ENCODE measurements at regions of chr11 and their contacts with region 1.

Region 1: DNA sequence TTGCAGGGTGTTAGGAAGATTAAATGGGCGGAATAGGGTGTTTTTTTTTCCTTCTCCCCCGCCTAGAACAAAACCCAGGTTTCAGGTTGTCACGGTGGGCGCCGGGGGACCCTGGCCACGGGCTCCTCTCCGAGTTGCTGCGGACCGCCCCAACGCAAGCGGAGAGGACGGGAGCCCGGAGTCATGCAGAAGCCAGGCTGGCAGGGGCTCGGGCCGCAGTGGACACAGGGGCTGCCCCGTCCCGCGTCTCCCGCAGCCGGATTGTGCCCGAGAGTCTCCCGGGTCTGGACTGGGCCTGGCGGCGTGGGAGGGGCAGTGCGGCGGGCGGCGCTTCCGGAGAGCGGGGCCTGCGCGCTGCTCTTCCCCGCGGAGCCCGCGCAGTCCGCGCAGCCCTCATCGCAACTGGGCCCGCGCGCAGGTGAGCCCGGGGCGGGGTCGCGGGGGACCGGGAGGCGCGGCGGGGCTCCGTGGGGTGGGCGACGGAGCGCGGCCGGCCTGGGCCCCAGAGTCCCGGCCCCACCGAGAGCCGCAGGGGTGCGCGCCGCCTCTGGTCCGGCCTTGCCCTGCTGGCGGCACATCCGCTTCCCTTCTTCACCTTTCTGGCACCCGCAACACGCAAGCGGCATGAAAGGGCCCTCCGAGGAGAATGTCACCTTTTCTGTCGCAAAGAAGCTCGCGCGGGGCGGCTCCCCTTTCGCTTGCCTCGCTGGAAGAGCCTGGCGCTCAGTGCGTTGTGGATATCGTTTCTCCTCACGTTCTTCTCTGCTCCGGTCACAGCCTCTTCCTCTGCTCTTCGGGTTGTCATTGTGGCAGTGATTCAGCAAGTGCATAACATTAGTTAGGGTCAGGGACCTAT is at the start of gene TIRAP:
- DNase-seq: peak; percentile 39 to 78 (median 62)
- ATAC-seq: peak; percentile 73 to 80 (median 76)
- H3K4me3 ChIP-seq: peak within 1 kb of the TSS; percentile 64 to 85
- H3K4me3 Mint-ChIP-seq: peak within 1 kb of the TSS; percentile 86 to 95 (median 90)
- H3K27ac ChIP-seq: peak within 1 kb of the TSS; percentile 77
- H3K27ac Mint-ChIP-seq: peak within 1 kb of the TSS; percentile 97 to 98
- H3K4me1 ChIP-seq: peaks cover 11 to 52% of the 10 kb centered on the region in 2 experiments
- H3K4me1 Mint-ChIP-seq: peaks cover 47 to 59% (median 49%) of the 10 kb centered on the region in 3 donors
- H3K27me3 ChIP-seq: no peaks in the 10 kb centered on the region
- H3K27me3 Mint-ChIP-seq: no peaks in the 10 kb centered on the region
- total RNA-seq, gene TIRAP: 11.3 to 23.4 (median 21.9) TPM

Region 2: DNA sequence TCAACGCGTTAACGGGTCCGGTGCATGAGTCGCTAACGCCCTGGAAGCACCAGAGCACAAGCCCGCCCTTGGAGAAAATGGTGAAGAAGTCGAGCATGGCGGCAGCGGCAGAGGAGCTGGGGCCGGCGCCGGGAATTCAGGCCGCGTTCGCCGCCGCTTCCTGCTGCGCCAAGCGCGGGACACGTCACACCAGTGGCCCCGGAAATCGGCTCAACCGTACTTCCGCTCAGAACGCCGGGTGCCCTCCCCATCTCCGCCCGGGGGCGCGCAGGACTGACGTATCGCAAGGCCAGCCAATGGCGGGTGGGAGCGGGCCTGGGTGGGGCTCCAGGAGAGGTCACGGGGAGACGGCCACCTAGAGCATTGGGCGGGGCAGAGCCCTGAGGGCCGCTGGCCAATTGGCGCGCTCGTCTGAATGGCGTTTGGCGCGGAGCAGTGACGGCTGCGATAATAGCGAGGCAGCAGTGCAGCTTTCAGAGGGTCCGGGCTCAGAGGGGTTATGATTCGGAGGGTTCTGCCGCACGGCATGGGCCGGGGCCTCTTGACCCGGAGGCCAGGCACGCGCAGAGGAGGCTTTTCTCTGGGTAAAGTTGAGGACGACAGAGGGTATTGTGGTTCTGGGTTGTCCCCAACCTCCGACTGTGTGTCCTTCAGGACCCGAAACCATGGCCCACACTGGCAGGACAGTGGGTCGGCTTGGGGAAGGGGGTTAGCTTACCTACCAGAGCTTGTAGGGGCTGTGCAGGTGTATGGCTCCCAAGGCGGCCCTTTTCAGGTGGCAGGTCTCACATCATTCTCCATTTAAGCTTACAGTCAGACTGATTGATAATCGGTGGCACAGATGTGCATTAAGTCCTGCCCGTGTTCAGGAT is 14.0 kb before region 1 on chr11 and contains the starts of genes FOXRED1 and SRPRA:
- CTCF ChIA-PET with region 1: no interaction called
- POLR2A ChIA-PET with region 1: interaction called, 4 to 13 read pairs
- DNase-seq: peak; percentile 97 to 100 (median 100)
- ATAC-seq: peak; percentile 97 to 99 (median 98)
- H3K4me3 ChIP-seq: peak within 1 kb of the TSS; percentile 91 to 97
- H3K4me3 Mint-ChIP-seq: peak within 1 kb of the TSS; percentile 94 to 99 (median 97)
- H3K27ac ChIP-seq: peak within 1 kb of the TSS; percentile 89
- H3K27ac Mint-ChIP-seq: peak within 1 kb of the TSS; percentile 97 to 98
- H3K4me1 ChIP-seq: peaks cover 18 to 20% of the 10 kb centered on the region in 2 experiments
- H3K4me1 Mint-ChIP-seq: peaks cover 41 to 49% (median 43%) of the 10 kb centered on the region in 3 donors
- H3K27me3 ChIP-seq: no peaks in the 10 kb centered on the region
- H3K27me3 Mint-ChIP-seq: no peaks in the 10 kb centered on the region
- total RNA-seq, gene FOXRED1: 32.5 to 38.5 (median 34.5) TPM
- total RNA-seq, gene SRPRA: 134 to 176 (median 142) TPM